RWPE1 (cell line): ENCODE measurements at regions of chr6 and their contacts with region 1.

Region 1: GRCh38 chr6:113858480-113859348 is 1.6 kb downstream of the MARCKS start:
- DNase-seq: peak; percentile 88
- H3K27ac ChIP-seq: peak overlapping the region; percentile 97
- CTCF ChIP-seq: peak; percentile 97

Region 2: GRCh38 chr6:112833581-112834131 is 1025.1 kb before region 1 on chr6:
- CTCF ChIA-PET with region 1: no interaction called
- POLR2A ChIA-PET with region 1: no interaction called
- DNase-seq: no peak
- H3K27ac ChIP-seq: no peak overlapping the region
- CTCF ChIP-seq: no peak

Region 3: GRCh38 chr6:113414511-113414910 is 444.2 kb before region 1 on chr6:
- CTCF ChIA-PET with region 1: interaction called, 12 read pairs
- POLR2A ChIA-PET with region 1: no interaction called
- DNase-seq: peak; percentile 56
- H3K27ac ChIP-seq: no peak overlapping the region
- CTCF ChIP-seq: peak; percentile 67

Region 4: GRCh38 chr6:113879186-113880096 is 20.7 kb after region 1 on chr6:
- CTCF ChIA-PET with region 1: interaction called, 12 read pairs
- POLR2A ChIA-PET with region 1: interaction called, 10 read pairs
- DNase-seq: peak; percentile 73
- H3K27ac ChIP-seq: no peak overlapping the region
- CTCF ChIP-seq: peak; percentile 83

Region 5: GRCh38 chr6:114068116-114068515 is 209.4 kb after region 1 on chr6:
- CTCF ChIA-PET with region 1: no interaction called
- POLR2A ChIA-PET with region 1: no interaction called
- DNase-seq: no peak
- H3K27ac ChIP-seq: no peak overlapping the region
- CTCF ChIP-seq: no peak